ENCODE measurements at regions of chr3 and their contacts with region 1.

Region 1: DNA sequence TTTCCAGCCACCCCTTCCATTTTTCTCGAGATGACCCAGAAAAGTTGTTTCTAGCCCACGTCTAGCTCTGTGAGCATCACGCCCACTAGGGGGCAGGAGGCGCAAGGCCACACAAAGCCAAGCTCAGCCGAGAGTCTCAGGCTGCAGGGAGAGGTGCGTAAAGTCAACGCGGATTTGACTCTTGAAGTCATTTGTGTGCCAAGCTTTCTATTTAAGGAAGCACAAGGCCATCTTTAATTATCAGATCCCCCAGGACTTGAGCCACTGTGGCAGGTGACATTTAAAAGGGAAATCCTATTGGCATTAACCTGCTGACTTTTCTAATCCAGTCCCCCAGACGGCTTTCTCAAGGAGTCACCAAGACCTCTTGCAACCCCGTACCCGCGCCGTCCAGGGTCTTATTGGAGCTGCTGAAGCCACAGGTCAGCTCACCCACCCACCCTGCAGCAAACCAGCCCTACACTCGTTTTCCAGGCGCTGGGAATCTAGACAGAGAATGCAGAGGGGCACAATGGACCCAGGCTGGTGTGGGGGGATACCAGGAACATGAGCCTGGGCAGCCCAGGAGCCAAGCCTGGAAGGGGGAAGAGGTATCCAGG is 62.1 kb downstream of the CAPN7 start:
- DNase-seq: peak; percentile 84
- H3K4me3 Mint-ChIP-seq: no peak overlapping the region
- H3K27ac Mint-ChIP-seq: no peak overlapping the region
- H3K4me1 Mint-ChIP-seq: peaks cover 31% of the 10 kb centered on the region
- H3K27me3 Mint-ChIP-seq: no peaks in the 10 kb centered on the region
- CTCF ChIP-seq: peak; percentile 79

Region 2: DNA sequence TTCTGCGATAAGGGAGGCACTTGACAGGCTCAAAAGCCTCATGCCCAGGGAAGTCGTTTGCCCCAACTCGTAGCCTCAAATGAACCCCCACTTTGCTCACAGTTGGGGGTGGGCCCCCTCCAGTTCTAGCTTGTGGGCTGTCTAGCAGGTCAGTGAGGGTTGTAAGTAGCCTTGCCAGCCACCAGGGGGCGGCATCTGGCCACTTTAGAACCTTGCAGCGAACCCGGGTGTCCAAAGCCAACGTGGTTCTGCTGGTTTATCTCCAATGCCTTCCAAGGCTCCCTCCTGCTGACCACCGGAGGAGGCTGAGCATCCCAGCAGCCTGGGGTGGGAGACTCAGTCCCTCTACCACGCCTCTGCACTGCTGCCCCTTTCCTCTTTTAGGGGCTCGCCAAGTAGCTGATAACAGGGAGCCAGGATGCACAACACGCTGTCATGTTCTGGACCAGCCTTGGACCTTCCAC is 160.0 kb before region 1 on chr3:
- CTCF ChIA-PET with region 1: interaction called, 32 read pairs
- POLR2A ChIA-PET with region 1: interaction called, 3 read pairs
- intact Hi-C with region 1: loop called (anchors 10 kb)
- DNase-seq: peak; percentile 75
- H3K4me3 Mint-ChIP-seq: no peak overlapping the region
- H3K27ac Mint-ChIP-seq: no peak overlapping the region
- H3K4me1 Mint-ChIP-seq: peaks cover 19% of the 10 kb centered on the region
- H3K27me3 Mint-ChIP-seq: no peaks in the 10 kb centered on the region
- CTCF ChIP-seq: peak; percentile 94

Region 3: GRCh38 chr3:15228147-15228546 is 40.0 kb before region 1 on chr3:
- CTCF ChIA-PET with region 1: no interaction called
- POLR2A ChIA-PET with region 1: no interaction called
- intact Hi-C with region 1: no loop called
- DNase-seq: no peak
- H3K4me3 Mint-ChIP-seq: no peak overlapping the region
- H3K27ac Mint-ChIP-seq: no peak overlapping the region
- H3K4me1 Mint-ChIP-seq: no peaks in the 10 kb centered on the region
- H3K27me3 Mint-ChIP-seq: no peaks in the 10 kb centered on the region
- CTCF ChIP-seq: no peak

Region 4: DNA sequence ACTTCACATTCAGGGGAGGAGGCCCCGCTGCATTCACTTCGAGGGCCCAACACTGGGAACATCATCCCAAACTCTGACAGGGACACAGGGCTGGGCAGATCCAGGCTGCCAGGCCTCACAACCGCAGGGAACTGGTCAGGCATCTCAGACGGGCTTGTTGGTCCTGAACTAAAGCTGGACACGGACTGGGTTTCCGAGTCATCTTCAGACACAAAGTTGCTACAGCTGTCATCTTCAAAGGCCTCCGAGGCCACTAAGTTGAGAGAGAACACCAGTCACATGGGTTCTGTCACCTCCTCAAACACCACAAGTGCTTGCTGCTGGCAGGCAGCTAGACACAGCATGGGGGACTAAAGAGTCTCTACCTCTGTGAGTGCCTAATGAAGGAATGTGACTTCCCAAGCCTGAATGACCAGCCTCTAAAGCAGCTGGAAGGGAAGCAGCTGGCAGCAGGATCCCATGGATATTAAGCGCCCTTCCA is 11.2 kb before region 1 on chr3:
- CTCF ChIA-PET with region 1: interaction called, 23 read pairs
- POLR2A ChIA-PET with region 1: interaction called, 5 read pairs
- intact Hi-C with region 1: no loop called
- DNase-seq: no peak
- H3K4me3 Mint-ChIP-seq: no peak overlapping the region
- H3K27ac Mint-ChIP-seq: no peak overlapping the region
- H3K4me1 Mint-ChIP-seq: peaks cover 15% of the 10 kb centered on the region
- H3K27me3 Mint-ChIP-seq: no peaks in the 10 kb centered on the region
- CTCF ChIP-seq: no peak

Region 5: GRCh38 chr3:15319575-15319974 is 51.4 kb after region 1 on chr3:
- CTCF ChIA-PET with region 1: interaction called, 24 read pairs
- POLR2A ChIA-PET with region 1: interaction called, 29 read pairs
- intact Hi-C with region 1: no loop called
- DNase-seq: no peak
- H3K4me3 Mint-ChIP-seq: no peak overlapping the region
- H3K27ac Mint-ChIP-seq: no peak overlapping the region
- H3K4me1 Mint-ChIP-seq: peaks cover 18% of the 10 kb centered on the region
- H3K27me3 Mint-ChIP-seq: no peaks in the 10 kb centered on the region
- CTCF ChIP-seq: no peak

Region 6: GRCh38 chr3:15367059-15367458 is 98.9 kb after region 1 on chr3:
- CTCF ChIA-PET with region 1: interaction called, 10 read pairs
- POLR2A ChIA-PET with region 1: interaction called, 3 read pairs
- intact Hi-C with region 1: no loop called
- DNase-seq: peak; percentile 18
- H3K4me3 Mint-ChIP-seq: no peak overlapping the region
- H3K27ac Mint-ChIP-seq: no peak overlapping the region
- H3K4me1 Mint-ChIP-seq: peaks cover 18% of the 10 kb centered on the region
- H3K27me3 Mint-ChIP-seq: no peaks in the 10 kb centered on the region
- CTCF ChIP-seq: no peak

Region 7: DNA sequence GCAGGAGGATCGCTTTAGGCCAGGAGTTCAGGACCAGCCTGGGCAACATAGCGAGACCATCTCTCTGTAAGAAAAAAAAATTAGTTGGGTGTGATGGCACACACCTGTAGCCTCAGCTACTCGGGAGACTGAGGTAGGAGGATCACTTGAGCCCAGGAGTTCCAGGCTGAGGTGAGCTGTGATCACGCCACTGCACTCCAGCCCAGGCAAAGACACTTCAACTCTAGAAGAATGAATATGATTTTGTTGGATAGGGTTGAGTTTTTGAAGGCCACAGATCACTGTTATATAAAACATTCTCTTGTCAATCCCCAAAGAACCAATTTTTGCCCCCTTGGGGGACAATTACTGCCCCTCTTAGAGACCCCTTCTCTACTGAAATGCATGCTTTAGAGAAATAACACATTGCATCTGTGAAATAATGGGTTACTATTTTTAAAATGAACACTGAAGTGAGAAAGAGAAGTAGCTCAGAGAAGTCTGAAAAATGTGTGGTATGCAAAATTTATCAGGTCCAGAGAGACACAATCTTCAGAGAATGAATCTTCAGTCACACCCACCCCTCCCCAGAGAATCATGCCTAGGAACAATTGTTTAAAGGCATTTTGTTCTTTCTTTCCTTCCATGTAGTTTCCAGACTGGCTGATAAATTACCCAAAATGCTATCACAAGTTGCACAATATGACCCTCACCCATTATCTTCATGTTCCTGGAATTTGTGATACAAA is 116.5 kb after region 1 on chr3:
- CTCF ChIA-PET with region 1: interaction called, 183 read pairs
- POLR2A ChIA-PET with region 1: interaction called, 6 read pairs
- intact Hi-C with region 1: no loop called
- DNase-seq: no peak
- H3K4me3 Mint-ChIP-seq: no peak overlapping the region
- H3K27ac Mint-ChIP-seq: no peak overlapping the region
- H3K4me1 Mint-ChIP-seq: peaks cover 6% of the 10 kb centered on the region
- H3K27me3 Mint-ChIP-seq: no peaks in the 10 kb centered on the region
- CTCF ChIP-seq: no peak

Region 8: DNA sequence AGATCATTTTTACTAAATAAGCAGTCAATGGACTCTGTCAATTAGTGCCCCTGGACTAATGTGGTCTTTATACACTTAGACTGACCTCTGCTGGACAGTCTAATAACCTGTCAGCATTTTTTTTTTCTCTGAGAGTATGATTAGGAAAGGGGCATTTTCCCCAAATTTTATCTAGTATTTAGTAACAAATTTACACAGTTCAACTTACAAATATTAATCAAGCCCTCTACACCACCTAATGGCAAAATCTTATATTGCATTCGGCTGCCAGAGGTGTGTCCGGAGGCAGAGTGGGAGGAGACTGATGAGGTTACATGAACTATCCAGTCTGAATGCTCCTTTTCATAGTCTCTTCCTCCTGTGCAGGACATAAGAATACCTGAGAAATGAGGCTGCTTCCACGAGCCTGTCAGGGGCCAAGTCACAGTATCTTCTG is 289.4 kb after region 1 on chr3:
- CTCF ChIA-PET with region 1: interaction called, 9 read pairs
- POLR2A ChIA-PET with region 1: no interaction called
- intact Hi-C with region 1: loop called (anchors 1 kb)
- DNase-seq: peak; percentile 82
- H3K4me3 Mint-ChIP-seq: no peak overlapping the region
- H3K27ac Mint-ChIP-seq: no peak overlapping the region
- H3K4me1 Mint-ChIP-seq: peaks cover 5% of the 10 kb centered on the region
- H3K27me3 Mint-ChIP-seq: no peaks in the 10 kb centered on the region
- CTCF ChIP-seq: peak; percentile 66